K562 (cell line): ENCODE measurements at regions of chr2 and their contacts with region 1.

Region 1: GRCh38 chr2:69369802-69370201 is 17.2 kb downstream of the GFPT1 start:
- DNase-seq: no peak
- ATAC-seq: no peak
- H3K4me3 ChIP-seq: no peak overlapping the region
- H3K27ac ChIP-seq: no peak overlapping the region
- H3K4me1 ChIP-seq: no peaks in the 10 kb centered on the region
- H3K27me3 ChIP-seq: no peaks in the 10 kb centered on the region
- CTCF ChIP-seq: no peak
- EP300 ChIP-seq: no peak
- POLR2A ChIP-seq: no peak
- RAD21 ChIP-seq: no peak

Region 2: GRCh38 chr2:69356471-69356870 is 13.3 kb before region 1 on chr2:
- CTCF ChIA-PET with region 1: no interaction called
- POLR2A ChIA-PET with region 1: interaction called, 11 read pairs
- in situ Hi-C with region 1: no loop called
- intact Hi-C with region 1: no loop called
- DNase-seq: no peak
- ATAC-seq: no peak
- H3K4me3 ChIP-seq: no peak overlapping the region
- H3K27ac ChIP-seq: no peak overlapping the region
- H3K4me1 ChIP-seq: no peaks in the 10 kb centered on the region
- H3K27me3 ChIP-seq: no peaks in the 10 kb centered on the region
- CTCF ChIP-seq: no peak
- EP300 ChIP-seq: no peak
- POLR2A ChIP-seq: no peak
- RAD21 ChIP-seq: no peak

Region 3: DNA sequence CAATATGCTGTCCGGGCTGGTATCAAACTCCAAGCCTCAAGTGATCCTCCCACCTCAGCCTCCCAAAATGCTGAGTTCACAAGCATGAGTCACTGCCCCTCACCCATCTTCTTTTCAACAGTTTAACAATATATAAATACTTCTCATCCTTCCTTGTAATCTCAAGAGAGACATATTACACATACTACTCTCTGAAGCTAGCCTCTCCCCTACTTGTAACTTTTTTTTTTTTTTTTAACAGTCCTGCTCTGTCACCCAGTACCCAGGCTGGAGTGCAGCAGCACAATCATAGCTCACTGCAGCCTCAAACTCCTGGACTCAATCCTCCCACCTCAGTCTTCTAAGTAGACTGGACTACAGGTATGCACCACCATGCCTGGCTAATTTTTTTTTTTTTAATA is 11.5 kb after region 1 on chr2:
- CTCF ChIA-PET with region 1: no interaction called
- POLR2A ChIA-PET with region 1: interaction called, 17 read pairs
- in situ Hi-C with region 1: no loop called
- intact Hi-C with region 1: no loop called
- DNase-seq: peak in 2 of 4 experiments; percentile 70 to 83
- ATAC-seq: peak; percentile 71
- H3K4me3 ChIP-seq: no peak overlapping the region
- H3K27ac ChIP-seq: peak overlapping the region; percentile 80
- H3K4me1 ChIP-seq: peaks cover 15 to 26% of the 10 kb centered on the region in 2 experiments; a peak in 4 of 5 replicates
- H3K27me3 ChIP-seq: no peaks in the 10 kb centered on the region
- CTCF ChIP-seq: no peak
- EP300 ChIP-seq: peak; percentile 77; the same call in 1 of the 2 replicates
- POLR2A ChIP-seq: no peak
- RAD21 ChIP-seq: no peak